ENCODE measurements at regions of chr2 and their contacts with region 1.

Region 1: DNA sequence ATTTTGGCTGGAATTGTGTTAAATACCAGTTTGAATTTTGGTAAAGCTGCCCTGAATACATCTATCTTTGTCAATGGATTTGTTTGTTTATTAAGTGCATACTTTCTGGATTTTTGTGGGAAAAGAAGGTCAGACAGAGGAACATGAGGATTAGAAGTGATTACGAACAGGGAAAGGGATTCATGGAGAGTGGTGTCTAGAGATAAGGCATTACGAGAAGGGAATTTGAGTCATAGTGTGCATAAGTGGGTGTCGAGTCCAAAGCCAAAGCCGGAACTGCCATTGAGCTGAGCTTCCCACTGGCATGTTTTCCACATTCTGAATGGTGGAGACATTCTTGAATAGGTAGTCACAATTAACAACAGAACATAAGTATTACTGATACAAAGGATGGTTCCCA is 68.9 kb upstream of the EFEMP1 start:
- ATAC-seq: peak in 2 of 8 experiments; percentile 75 to 93
- H3K4me3 ChIP-seq: no peak overlapping the region
- H3K27ac ChIP-seq: no peak overlapping the region
- H3K4me1 ChIP-seq: no peaks in the 10 kb centered on the region

Region 2: DNA sequence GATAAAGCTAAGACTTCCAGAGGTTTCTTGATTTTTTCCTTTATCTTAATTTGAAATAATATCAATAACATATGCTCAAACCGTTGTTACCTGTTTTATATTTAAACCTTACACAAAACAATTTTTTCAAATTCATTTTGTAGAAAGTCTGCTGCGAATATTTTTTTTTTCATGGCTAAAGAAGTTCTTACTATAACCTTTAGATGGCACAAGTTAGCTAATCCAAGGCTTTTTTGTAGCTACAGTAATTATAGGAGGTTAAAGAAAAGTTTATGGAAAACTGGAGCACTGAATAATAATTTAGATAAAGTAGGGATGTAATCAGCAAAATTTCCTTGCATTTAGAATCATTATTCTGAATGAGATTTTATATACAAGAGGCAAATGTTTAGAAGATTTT is 220.9 kb before region 1 on chr2:
- in situ Hi-C with region 1: loop called in 1 of 9 experiments (anchors 25 kb)
- ATAC-seq: peak in 1 of 8 experiments; percentile 38
- H3K4me3 ChIP-seq: no peak overlapping the region
- H3K27ac ChIP-seq: no peak overlapping the region
- H3K4me1 ChIP-seq: no peaks in the 10 kb centered on the region